ENCODE measurements at regions of chr1 and their contacts with region 1.

Region 1: DNA sequence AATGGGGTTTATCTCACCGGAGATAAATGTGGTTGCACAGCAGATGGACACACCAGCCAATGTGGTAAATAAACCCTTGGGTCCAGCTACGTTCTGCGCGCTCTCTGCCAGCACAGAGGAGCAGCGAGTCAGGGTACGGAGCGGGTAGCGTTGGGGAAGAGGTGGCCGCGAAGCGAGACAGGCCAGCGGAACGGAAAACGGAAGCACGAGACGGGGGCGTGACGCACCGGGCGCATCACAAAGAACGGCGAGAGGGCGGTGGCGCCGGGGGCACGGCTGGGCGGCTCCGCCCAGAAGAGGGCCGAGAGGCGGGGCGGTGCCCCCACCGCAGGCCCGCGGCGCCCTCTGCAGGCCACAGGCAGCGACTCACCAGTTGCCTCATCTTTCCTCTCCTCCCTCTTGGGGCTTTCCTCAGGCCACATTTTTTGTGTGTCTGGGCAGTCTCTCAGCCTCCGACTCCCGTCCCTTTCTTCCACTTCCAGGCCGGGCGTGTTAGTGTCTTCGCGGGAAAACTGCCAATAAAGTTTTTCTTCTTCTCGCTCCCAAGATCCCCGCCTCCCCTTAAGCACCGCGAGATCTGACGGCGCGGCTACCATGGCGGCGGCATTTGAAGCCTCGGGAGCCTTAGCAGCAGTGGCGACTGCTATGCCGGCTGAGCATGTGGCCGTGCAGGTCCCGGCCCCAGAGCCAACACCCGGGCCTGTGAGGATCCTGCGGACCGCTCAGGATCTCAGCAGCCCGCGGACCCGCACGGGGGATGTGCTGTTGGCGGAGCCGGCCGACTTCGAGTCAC is at the start of gene DDX20:
- DNase-seq: peak; percentile 86 to 97 (median 93)
- ATAC-seq: peak; percentile 89
- H3K4me3 ChIP-seq: peak within 1 kb of the TSS; percentile 75 to 89
- H3K4me3 Mint-ChIP-seq: peak within 1 kb of the TSS; percentile 90
- H3K27ac ChIP-seq: peak within 1 kb of the TSS; percentile 93 to 96
- H3K27ac Mint-ChIP-seq: peak within 1 kb of the TSS; percentile 98
- H3K4me1 ChIP-seq: peaks cover 19% of the 10 kb centered on the region
- H3K4me1 Mint-ChIP-seq: peaks cover 43% of the 10 kb centered on the region
- H3K27me3 ChIP-seq: no peaks in the 10 kb centered on the region
- H3K27me3 Mint-ChIP-seq: no peaks in the 10 kb centered on the region
- CTCF ChIP-seq: peak; percentile 83
- total RNA-seq, gene DDX20: 35.4 to 35.9 TPM

Region 2: DNA sequence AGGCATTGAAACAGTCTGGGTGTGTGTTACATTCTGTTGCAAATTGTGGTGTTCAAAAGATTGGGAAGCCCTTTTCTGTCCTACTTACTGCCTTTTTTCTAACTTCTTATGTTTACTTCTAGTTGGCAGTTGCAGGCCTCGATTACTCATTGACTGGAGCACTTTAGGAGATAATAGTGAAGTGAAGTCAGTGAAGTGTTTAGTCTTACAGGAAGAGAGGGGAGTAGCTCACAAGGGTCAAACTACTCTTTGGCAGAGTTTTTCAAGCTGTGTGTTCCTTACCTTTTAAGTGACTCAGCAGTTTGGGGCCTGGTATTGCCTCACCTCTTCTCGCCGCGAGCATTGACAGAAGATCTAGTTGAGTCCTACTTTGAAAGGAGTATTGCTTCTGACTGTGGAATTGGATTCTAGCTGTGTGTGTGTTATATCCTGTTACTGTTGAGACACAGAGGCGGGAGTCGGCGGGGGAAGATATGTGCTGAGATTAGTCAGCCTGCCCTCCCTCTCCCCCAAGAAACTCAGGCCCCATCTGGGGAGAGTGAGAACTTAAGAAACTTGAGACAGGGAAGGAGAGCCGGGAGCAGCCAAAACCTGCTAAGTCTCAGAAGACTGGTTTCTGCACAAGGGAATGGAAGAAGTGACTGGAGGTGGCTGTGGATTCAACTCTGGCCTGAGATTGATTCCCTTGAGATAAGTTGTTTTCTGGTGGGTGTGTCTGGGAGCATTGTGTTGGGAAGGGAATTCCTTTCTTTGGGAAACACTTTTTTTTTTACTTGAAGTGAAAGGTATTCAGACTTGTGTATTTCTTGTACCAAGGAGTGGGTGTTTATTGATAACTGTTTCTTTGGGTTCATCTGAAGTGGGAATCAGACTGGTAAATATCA is 1751.5 kb before region 1 on chr1:
- CTCF ChIA-PET with region 1: no interaction called
- POLR2A ChIA-PET with region 1: no interaction called
- intact Hi-C with region 1: no loop called
- DNase-seq: peak in 1 of 9 experiments; percentile 24
- ATAC-seq: peak; percentile 42
- H3K4me3 ChIP-seq: no peak overlapping the region
- H3K4me3 Mint-ChIP-seq: peak overlapping the region; percentile 44
- H3K27ac ChIP-seq: no peak overlapping the region
- H3K27ac Mint-ChIP-seq: peak overlapping the region; percentile 41
- H3K4me1 ChIP-seq: peaks cover 13% of the 10 kb centered on the region
- H3K4me1 Mint-ChIP-seq: peaks cover 30% of the 10 kb centered on the region
- H3K27me3 ChIP-seq: no peaks in the 10 kb centered on the region
- H3K27me3 Mint-ChIP-seq: no peaks in the 10 kb centered on the region
- CTCF ChIP-seq: no peak

Region 3: DNA sequence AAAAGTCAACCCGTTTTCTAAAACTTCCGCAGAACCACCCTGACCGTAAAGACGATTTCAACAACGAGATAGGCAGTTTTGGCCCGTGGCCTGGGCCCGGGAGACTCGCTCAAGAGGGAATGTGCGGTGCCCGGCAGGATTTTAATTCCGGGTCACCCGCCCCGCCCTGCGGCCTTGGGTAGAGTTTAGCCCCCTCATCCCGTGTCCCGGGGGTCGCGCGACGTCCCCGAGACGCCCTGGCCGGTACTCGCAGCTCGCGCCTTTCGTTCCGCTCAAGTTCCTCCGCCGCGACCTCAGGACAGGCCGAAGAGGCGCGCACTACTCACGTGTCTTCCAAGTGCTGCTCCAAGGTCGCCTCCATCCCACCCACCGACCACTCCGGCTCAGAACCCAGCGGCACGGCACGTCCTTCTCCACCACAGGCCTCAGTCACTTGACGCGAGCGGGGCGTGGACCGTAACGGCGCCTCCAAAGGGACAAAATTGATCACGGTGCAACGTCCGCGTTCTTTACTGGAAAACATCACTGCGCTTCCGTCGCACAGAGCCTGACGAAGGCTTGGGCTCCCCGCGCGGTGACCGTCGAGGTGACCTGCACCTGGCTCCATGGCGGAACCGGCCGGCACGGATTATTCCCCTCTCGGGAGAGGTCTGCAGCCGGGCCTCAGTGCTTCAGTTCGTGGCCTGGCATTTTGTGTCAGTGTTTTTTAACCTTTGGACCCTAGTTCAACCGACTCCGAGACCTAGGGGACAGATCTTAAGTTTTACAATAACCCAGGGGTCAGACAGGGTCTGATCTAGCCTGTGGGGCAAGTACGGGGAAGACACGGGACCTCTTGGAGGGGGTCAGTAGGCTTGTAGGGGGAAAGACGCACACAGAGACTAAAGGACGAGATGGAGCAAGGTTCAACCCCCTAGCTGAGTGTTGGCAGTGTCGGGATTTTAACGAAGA is 1348.0 kb before region 1 on chr1 and contains the start of gene LAMTOR5:
- CTCF ChIA-PET with region 1: no interaction called
- POLR2A ChIA-PET with region 1: no interaction called
- intact Hi-C with region 1: loop called in 1 of 2 experiments (anchors 5 kb)
- DNase-seq: peak; percentile 83 to 95 (median 89)
- ATAC-seq: peak; percentile 93
- H3K4me3 ChIP-seq: peak within 1 kb of the TSS; percentile 92 to 99
- H3K4me3 Mint-ChIP-seq: peak within 1 kb of the TSS; percentile 99
- H3K27ac ChIP-seq: peak within 1 kb of the TSS; percentile 91 to 92
- H3K27ac Mint-ChIP-seq: peak within 1 kb of the TSS; percentile 99
- H3K4me1 ChIP-seq: peaks cover 23% of the 10 kb centered on the region
- H3K4me1 Mint-ChIP-seq: peaks cover 29% of the 10 kb centered on the region
- H3K27me3 ChIP-seq: no peaks in the 10 kb centered on the region
- H3K27me3 Mint-ChIP-seq: no peaks in the 10 kb centered on the region
- CTCF ChIP-seq: no peak
- total RNA-seq, gene LAMTOR5: 106 to 109 TPM

Region 4: DNA sequence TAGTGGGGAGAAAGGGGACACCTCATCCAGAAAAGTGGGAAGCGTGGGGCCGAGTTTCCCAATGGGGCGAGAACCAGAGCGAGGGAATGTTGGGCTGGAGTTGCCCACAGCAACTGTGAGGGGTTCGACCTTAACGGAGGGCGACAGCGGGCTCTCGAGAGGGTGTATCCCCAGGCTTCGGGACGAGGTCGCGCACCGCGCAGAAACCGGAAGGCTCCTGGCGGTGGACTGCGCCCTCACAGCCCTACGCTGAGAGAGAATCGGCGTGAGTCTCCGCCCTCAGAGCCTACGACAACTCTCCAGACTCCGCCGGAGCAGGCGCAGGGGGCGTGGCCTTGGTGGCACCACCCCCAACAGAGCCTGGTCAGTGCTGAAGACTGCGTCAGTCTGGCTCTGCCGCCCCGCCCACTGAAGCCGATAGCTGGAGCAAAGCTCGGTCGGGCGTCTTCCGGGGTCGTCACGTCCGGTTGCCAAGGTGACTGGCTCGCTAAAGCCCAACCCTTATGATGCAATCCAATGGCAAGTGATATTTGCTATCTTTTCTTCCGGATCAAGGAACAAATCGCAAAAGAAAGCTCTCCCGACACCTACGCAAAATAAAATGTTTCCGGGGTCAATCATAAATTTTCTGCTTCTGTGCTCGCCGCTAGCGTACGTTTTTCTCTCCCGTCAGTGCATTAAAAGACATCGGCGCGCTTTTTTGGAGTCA is 791.7 kb before region 1 on chr1 and contains the start of gene LRIF1:
- CTCF ChIA-PET with region 1: no interaction called
- POLR2A ChIA-PET with region 1: no interaction called
- intact Hi-C with region 1: loop called in 1 of 2 experiments (anchors 1 kb)
- DNase-seq: peak; percentile 98 to 100 (median 100)
- ATAC-seq: peak; percentile 96
- H3K4me3 ChIP-seq: peak within 1 kb of the TSS; percentile 77 to 88
- H3K4me3 Mint-ChIP-seq: peak within 1 kb of the TSS; percentile 84
- H3K27ac ChIP-seq: peak within 1 kb of the TSS; percentile 98 to 99
- H3K27ac Mint-ChIP-seq: peak within 1 kb of the TSS; percentile 99
- H3K4me1 ChIP-seq: peaks cover 21% of the 10 kb centered on the region
- H3K4me1 Mint-ChIP-seq: peaks cover 33% of the 10 kb centered on the region
- H3K27me3 ChIP-seq: peaks cover 0 to 2% of the 10 kb centered on the region in 2 experiments
- H3K27me3 Mint-ChIP-seq: peaks cover 10% of the 10 kb centered on the region
- CTCF ChIP-seq: peak; percentile 59
- total RNA-seq, gene LRIF1: 1.8 to 1.9 TPM

Region 5: GRCh38 chr1:111203681-111204200 is 551.8 kb before region 1 on chr1:
- CTCF ChIA-PET with region 1: no interaction called
- POLR2A ChIA-PET with region 1: no interaction called
- intact Hi-C with region 1: loop called in 1 of 2 experiments (anchors 5 kb)
- DNase-seq: peak; percentile 60 to 92 (median 88)
- ATAC-seq: peak; percentile 41
- H3K4me3 ChIP-seq: peak overlapping the region; percentile 74 to 93
- H3K4me3 Mint-ChIP-seq: peak overlapping the region; percentile 94
- H3K27ac ChIP-seq: peak overlapping the region; percentile 74 to 84
- H3K27ac Mint-ChIP-seq: peak overlapping the region; percentile 97
- H3K4me1 ChIP-seq: peaks cover 54% of the 10 kb centered on the region
- H3K4me1 Mint-ChIP-seq: peaks cover 76% of the 10 kb centered on the region
- H3K27me3 ChIP-seq: no peaks in the 10 kb centered on the region
- H3K27me3 Mint-ChIP-seq: no peaks in the 10 kb centered on the region
- CTCF ChIP-seq: no peak

Region 6: GRCh38 chr1:111448918-111449702 is 306.4 kb before region 1 on chr1 and contains the starts of genes ATP5PB and WDR77:
- CTCF ChIA-PET with region 1: interaction called, 3 read pairs
- POLR2A ChIA-PET with region 1: interaction called, 3 read pairs
- intact Hi-C with region 1: loop called (anchors 1 kb)
- DNase-seq: peak; percentile 75 to 98 (median 89)
- ATAC-seq: peak; percentile 94
- H3K4me3 ChIP-seq: peak within 1 kb of the TSS; percentile 77 to 86
- H3K4me3 Mint-ChIP-seq: peak within 1 kb of the TSS; percentile 99
- H3K27ac ChIP-seq: peak within 1 kb of the TSS; percentile 75 to 83
- H3K27ac Mint-ChIP-seq: peak within 1 kb of the TSS; percentile 98
- H3K4me1 ChIP-seq: peaks cover 58% of the 10 kb centered on the region
- H3K4me1 Mint-ChIP-seq: peaks cover 84% of the 10 kb centered on the region
- H3K27me3 ChIP-seq: no peaks in the 10 kb centered on the region
- H3K27me3 Mint-ChIP-seq: no peaks in the 10 kb centered on the region
- CTCF ChIP-seq: no peak
- total RNA-seq, gene ATP5PB: 59.9 to 64.6 TPM
- total RNA-seq, gene WDR77: 9.5 to 11.4 TPM

Region 7: DNA sequence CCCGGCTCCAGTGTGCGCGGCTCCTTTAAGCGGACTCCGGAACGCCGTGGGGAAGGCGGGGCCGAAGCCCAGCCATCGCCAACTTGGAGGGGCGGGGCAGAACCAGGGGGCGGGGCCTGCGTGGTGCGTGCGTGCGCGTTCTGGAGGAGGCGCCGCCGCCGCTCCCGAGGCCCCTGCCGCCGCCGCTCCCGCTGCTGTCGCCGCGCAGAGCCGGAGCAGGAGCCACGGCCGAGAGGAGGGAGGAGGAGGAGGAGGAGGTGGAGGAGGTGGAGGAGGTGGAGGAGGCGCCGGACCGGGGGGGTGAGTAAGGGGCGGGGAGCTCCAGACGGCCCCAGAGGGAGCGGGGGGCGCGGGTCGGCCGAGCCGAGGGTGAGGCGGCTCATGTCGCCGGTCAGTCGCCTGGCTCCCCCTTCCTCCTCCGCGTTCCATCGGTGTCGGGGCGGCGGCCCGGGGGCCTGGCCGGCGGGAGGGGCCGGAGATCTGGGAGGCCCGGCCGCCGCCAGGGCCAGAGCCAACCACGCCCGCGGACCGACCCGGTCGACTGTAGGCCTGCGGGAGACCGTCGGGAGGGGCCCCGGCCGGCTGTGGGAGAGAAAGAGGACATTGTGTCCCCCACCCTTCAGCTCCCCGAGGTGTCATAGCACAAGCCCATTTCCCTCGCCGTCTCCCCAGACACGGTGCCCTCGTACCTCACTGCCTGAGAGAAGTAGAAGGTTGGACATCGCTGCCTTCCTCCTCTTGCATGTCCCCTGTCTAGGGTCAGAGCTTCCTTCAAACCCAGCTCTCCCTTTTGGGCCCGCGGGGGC is 135.7 kb before region 1 on chr1 and contains the start of gene RAP1A:
- CTCF ChIA-PET with region 1: no interaction called
- POLR2A ChIA-PET with region 1: no interaction called
- intact Hi-C with region 1: loop called (anchors 2 kb)
- DNase-seq: peak; percentile 93 to 97 (median 94)
- ATAC-seq: peak; percentile 80
- H3K4me3 ChIP-seq: peak within 1 kb of the TSS; percentile 71 to 87
- H3K4me3 Mint-ChIP-seq: peak within 1 kb of the TSS; percentile 95
- H3K27ac ChIP-seq: peak within 1 kb of the TSS; percentile 66 to 86
- H3K27ac Mint-ChIP-seq: peak within 1 kb of the TSS; percentile 95
- H3K4me1 ChIP-seq: peaks cover 60% of the 10 kb centered on the region
- H3K4me1 Mint-ChIP-seq: peaks cover 70% of the 10 kb centered on the region
- H3K27me3 ChIP-seq: no peaks in the 10 kb centered on the region
- H3K27me3 Mint-ChIP-seq: no peaks in the 10 kb centered on the region
- CTCF ChIP-seq: no peak
- total RNA-seq, gene RAP1A: 63.4 to 68.5 TPM

Region 8: DNA sequence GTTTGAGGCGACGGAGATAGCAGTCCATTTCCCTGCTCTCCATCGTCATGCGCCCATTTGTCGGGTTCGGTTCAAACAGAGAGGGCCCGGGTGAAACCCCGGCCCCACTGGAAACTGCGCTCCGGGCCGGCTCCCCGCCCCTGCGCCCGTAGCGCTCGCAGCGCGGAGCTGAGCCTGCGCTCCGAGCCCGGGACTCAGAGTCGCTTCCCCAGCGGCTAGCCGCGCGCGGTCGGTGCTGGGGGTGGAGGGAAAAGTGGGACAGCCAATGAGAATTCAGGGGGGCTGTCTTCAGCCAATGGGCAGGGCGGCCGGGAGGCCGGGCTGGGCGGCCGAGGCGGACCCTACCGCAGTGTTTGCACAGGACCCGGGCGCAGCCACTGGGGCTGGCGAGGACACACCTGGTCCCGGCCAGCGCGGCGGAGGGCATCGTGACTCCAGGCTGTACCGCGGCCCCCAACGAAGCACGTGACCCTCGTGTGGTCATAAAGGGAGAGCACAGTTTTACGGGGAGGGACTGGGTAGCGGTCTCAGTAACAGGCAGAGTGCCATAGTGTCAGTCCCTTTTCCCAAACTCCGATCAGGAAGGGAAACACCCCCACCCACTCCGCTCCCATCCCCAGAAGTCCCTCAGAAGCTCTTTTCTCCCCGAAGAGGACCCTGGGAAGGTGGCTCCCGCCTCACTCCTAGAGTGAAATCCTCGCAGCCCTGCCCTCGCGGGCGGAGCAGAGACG is 16.2 kb before region 1 on chr1 and contains the start of gene INKA2:
- CTCF ChIA-PET with region 1: interaction called, 4 read pairs
- POLR2A ChIA-PET with region 1: interaction called, 17 read pairs
- intact Hi-C with region 1: loop called (anchors 1 to 2 kb)
- DNase-seq: peak; percentile 22 to 77 (median 65)
- ATAC-seq: peak; percentile 58
- H3K4me3 ChIP-seq: peak within 1 kb of the TSS; percentile 59 to 74
- H3K4me3 Mint-ChIP-seq: peak within 1 kb of the TSS; percentile 91
- H3K27ac ChIP-seq: no peak within 1 kb of the TSS
- H3K27ac Mint-ChIP-seq: no peak within 1 kb of the TSS
- H3K4me1 ChIP-seq: peaks cover 9% of the 10 kb centered on the region
- H3K4me1 Mint-ChIP-seq: peaks cover 21% of the 10 kb centered on the region
- H3K27me3 ChIP-seq: peaks cover 3 to 32% of the 10 kb centered on the region in 2 experiments
- H3K27me3 Mint-ChIP-seq: peaks cover 25% of the 10 kb centered on the region
- CTCF ChIP-seq: no peak
- total RNA-seq, gene INKA2: 0.36 to 0.54 TPM

Region 9: GRCh38 chr1:111927652-111928051 is 172.1 kb after region 1 on chr1:
- CTCF ChIA-PET with region 1: no interaction called
- POLR2A ChIA-PET with region 1: no interaction called
- intact Hi-C with region 1: no loop called
- DNase-seq: no peak
- ATAC-seq: no peak
- H3K4me3 ChIP-seq: no peak overlapping the region
- H3K4me3 Mint-ChIP-seq: no peak overlapping the region
- H3K27ac ChIP-seq: no peak overlapping the region
- H3K27ac Mint-ChIP-seq: no peak overlapping the region
- H3K4me1 ChIP-seq: no peaks in the 10 kb centered on the region
- H3K4me1 Mint-ChIP-seq: no peaks in the 10 kb centered on the region
- H3K27me3 ChIP-seq: no peaks in the 10 kb centered on the region
- H3K27me3 Mint-ChIP-seq: peaks cover 22% of the 10 kb centered on the region
- CTCF ChIP-seq: no peak

Measured in CD8-positive, alpha-beta T cell (primary cell).